K562 (cell line): ENCODE measurements at regions of chr16 and their contacts with region 1.

Region 1: DNA sequence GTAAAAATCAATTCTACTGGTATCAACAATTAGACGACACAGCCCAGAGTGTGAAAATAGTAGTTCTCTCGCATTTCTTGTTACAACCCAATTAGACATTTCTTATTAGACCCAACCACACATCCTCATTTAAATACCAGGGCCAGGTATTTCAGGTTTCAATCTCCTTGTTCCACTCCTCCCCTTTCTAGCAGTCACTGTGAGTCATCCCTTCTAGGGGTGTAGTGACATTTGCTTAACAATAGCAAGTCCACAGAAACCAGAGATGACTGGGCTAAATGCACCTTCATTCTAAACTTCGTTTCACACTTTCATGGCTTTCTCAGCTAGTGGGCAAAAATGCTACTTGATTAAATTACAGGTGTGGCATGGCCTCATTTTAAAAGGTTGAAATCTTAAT is 116.9 kb upstream of the CACNG3 start:
- DNase-seq: peak; percentile 12 to 32 (median 23)
- ATAC-seq: no peak
- H3K4me3 ChIP-seq: no peak overlapping the region
- H3K27ac ChIP-seq: no peak overlapping the region
- H3K4me1 ChIP-seq: peaks cover 17 to 18% of the 10 kb centered on the region in 2 experiments; a peak in 3 of 5 replicates
- H3K27me3 ChIP-seq: no peaks in the 10 kb centered on the region
- CTCF ChIP-seq: no peak
- EP300 ChIP-seq: no peak
- POLR2A ChIP-seq: no peak
- RAD21 ChIP-seq: no peak

Region 2: GRCh38 chr16:24075931-24076716 is 63.2 kb before region 1 on chr16:
- CTCF ChIA-PET with region 1: no interaction called
- POLR2A ChIA-PET with region 1: no interaction called
- in situ Hi-C with region 1: no loop called
- intact Hi-C with region 1: loop called (anchors 5 kb)
- DNase-seq: peak; percentile 42 to 75 (median 54)
- ATAC-seq: peak; percentile 85
- H3K4me3 ChIP-seq: no peak overlapping the region
- H3K27ac ChIP-seq: peak overlapping the region; percentile 39; the same call in 1 of the 3 replicates
- H3K4me1 ChIP-seq: peaks cover 3 to 28% of the 10 kb centered on the region in 2 experiments; a peak in 4 of 5 replicates
- H3K27me3 ChIP-seq: no peaks in the 10 kb centered on the region
- CTCF ChIP-seq: no peak
- EP300 ChIP-seq: no peak; the same call in 1 of the 2 replicates
- POLR2A ChIP-seq: no peak
- RAD21 ChIP-seq: no peak

Region 3: GRCh38 chr16:24151482-24151939 is 12.2 kb after region 1 on chr16:
- CTCF ChIA-PET with region 1: no interaction called
- POLR2A ChIA-PET with region 1: no interaction called
- in situ Hi-C with region 1: no loop called
- intact Hi-C with region 1: no loop called
- DNase-seq: no peak
- ATAC-seq: no peak
- H3K4me3 ChIP-seq: no peak overlapping the region
- H3K27ac ChIP-seq: no peak overlapping the region
- H3K4me1 ChIP-seq: no peaks in the 10 kb centered on the region
- H3K27me3 ChIP-seq: no peaks in the 10 kb centered on the region
- CTCF ChIP-seq: no peak
- EP300 ChIP-seq: no peak
- POLR2A ChIP-seq: no peak
- RAD21 ChIP-seq: no peak

Region 4: DNA sequence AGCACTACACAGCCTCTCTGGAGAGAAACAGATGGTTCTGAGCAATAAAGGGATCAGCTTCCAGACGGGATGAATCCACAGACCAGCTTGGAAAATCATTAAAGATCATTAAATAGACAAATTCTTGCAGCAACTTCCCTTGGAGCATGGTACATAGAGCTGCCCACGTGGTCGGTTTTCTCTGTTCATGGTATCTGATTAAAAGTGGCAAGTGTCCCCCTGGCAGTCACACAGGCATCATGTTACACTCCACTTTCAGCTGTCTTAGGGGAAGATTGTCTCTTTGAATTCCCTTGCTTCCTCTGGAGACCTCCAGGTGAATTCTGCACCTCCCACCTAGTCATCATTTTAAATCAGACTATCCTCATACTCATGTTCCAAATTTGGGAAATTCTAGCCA is 24.7 kb after region 1 on chr16:
- CTCF ChIA-PET with region 1: no interaction called
- POLR2A ChIA-PET with region 1: no interaction called
- in situ Hi-C with region 1: no loop called
- intact Hi-C with region 1: no loop called
- DNase-seq: no peak
- ATAC-seq: no peak
- H3K4me3 ChIP-seq: no peak overlapping the region
- H3K27ac ChIP-seq: no peak overlapping the region
- H3K4me1 ChIP-seq: no peaks in the 10 kb centered on the region
- H3K27me3 ChIP-seq: no peaks in the 10 kb centered on the region
- CTCF ChIP-seq: no peak
- EP300 ChIP-seq: no peak
- POLR2A ChIP-seq: no peak
- RAD21 ChIP-seq: no peak